ENCODE measurements at regions of chr12 and their contacts with region 1.

Region 1: DNA sequence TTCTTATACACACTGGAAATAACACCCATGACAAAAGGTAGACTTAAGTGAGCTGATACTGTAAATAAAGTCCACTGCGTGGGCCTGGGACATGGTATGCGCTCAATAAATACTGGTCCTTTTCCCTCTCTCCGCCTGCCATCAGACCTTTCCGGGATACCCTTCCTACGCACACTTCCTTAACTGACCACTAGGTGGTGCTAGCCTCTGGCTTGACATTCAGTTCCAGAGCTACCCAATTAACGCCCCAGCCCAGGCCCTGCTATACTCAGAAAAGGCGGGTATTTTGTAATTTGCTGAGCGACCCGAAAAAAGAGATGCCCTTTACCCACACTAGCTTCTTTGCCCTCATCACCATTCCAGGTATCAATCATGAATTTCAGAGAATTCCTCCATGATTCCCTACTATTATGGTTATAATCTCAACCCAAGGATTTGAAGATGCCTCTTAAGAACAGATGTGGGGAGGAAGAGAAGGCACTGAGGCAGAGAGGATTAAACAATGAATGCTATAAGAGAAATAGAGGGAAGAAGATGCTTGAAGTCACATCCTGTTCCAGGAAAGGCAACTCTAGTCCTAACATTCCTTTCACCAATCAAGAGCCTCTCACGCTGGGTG is 3.9 kb upstream of the LRP1 start:
- DNase-seq: peak in 4 of 5 donors; percentile 65 to 78 (median 74)
- ATAC-seq: peak in 3 of 4 donors; percentile 27 to 48 (median 30)
- H3K4me3 ChIP-seq: no peak overlapping the region
- H3K27ac ChIP-seq: no peak overlapping the region
- H3K4me1 ChIP-seq: peaks cover 0 to 20% (median 6%) of the 10 kb centered on the region in 12 donors
- H3K27me3 ChIP-seq: no peaks in the 10 kb centered on the region
- CTCF ChIP-seq: peak; percentile 91 to 100 (median 97)
- POLR2A ChIP-seq: no peak

Region 2: DNA sequence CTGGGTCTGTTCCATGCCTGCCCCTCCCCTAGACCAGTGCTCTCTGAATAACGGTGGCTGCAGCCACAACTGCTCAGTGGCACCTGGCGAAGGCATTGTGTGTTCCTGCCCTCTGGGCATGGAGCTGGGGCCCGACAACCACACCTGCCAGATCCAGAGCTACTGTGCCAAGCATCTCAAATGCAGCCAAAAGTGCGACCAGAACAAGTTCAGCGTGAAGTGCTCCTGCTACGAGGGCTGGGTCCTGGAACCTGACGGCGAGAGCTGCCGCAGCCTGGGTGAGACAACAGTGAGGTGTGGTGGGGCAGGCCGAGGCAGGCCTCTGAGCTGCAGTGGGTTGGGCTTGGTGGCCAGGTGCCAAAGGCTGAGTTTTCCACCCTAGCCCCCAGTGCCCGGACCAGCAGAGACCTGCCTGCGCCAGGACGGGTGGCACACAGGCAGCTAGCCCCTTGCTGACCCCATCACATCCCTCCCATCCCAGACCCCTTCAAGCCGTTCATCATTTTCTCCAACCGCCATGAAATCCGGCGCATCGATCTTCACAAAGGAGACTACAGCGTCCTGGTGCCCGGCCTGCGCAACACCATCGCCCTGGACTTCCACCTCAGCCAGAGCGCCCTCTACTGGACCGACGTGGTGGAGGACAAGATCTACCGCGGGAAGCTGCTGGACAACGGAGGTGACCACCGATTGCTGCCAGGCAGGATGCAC is 51.2 kb after region 1 on chr12:
- intact Hi-C with region 1: loop called in 8 of 10 experiments (anchors 2 kb)
- DNase-seq: peak; percentile 76 to 90 (median 82)
- ATAC-seq: peak; percentile 28 to 62 (median 48)
- H3K4me3 ChIP-seq: no peak overlapping the region
- H3K27ac ChIP-seq: peak overlapping the region in 5 of 12 donors; percentile 9 to 31 (median 20)
- H3K4me1 ChIP-seq: peaks cover 0 to 15% (median 1%) of the 10 kb centered on the region in 12 donors
- H3K27me3 ChIP-seq: no peaks in the 10 kb centered on the region
- CTCF ChIP-seq: peak; percentile 49 to 77 (median 66)
- POLR2A ChIP-seq: no peak

Region 3: DNA sequence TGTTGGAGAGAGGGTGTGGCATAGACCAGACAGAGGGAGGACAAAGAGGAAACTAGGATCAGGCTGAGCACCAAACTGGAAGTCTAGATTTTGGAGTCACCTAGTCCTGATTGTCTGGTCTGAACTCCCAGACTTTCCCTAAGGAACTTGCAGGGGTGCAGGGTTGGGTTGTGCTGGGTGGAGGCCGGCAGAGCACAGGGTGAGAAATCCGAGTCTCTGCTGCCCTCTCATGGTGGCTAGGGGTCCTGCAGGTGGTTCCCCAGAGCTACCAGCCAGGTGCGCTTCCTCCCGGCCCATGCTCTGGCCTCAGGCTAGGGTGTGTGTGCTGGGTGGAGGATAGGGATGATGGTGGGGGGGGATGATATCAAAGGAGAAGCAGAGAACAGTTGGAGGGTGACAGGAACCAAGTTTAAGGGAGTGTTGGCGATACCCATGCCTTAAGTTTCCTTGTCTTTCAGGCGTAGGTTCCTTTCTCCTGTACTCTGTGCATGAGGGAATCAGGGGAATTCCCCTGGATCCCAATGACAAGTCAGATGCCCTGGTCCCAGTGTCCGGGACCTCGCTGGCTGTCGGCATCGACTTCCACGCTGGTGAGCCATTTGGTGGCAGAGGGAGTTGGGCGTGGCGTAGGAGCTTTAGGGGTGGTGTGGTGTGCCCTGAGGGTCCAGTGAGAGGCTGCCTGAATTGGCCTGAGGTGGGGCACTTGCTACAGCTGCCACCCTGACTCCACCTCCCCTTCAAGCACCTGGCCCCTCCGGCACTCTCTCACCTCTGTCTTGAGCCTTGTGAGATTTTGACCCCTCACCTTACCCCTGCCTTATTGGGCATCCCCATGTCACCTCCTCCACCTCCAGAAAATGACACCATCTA is 58.8 kb after region 1 on chr12:
- intact Hi-C with region 1: loop called (anchors 1 to 2 kb)
- DNase-seq: peak; percentile 61 to 84 (median 78)
- ATAC-seq: peak; percentile 52 to 83 (median 76)
- H3K4me3 ChIP-seq: no peak overlapping the region
- H3K27ac ChIP-seq: no peak overlapping the region
- H3K4me1 ChIP-seq: no peaks in the 10 kb centered on the region
- H3K27me3 ChIP-seq: no peaks in the 10 kb centered on the region
- CTCF ChIP-seq: peak; percentile 71 to 92 (median 87)
- POLR2A ChIP-seq: no peak

Region 4: GRCh38 chr12:57238854-57239554 is 114.6 kb after region 1 on chr12:
- intact Hi-C with region 1: loop called in 1 of 10 experiments (anchors 5 kb)
- DNase-seq: peak; percentile 88 to 96 (median 90)
- ATAC-seq: peak; percentile 43 to 74 (median 70)
- H3K4me3 ChIP-seq: peak overlapping the region; percentile 18 to 66 (median 56)
- H3K27ac ChIP-seq: peak overlapping the region in 11 of 12 donors; percentile 7 to 86 (median 49)
- H3K4me1 ChIP-seq: peaks cover 5 to 99% (median 54%) of the 10 kb centered on the region in 12 donors
- H3K27me3 ChIP-seq: peaks cover 4 to 78% (median 36%) of the 10 kb centered on the region in 9 donors
- CTCF ChIP-seq: peak; percentile 100
- POLR2A ChIP-seq: peak in 1 of 2 donors; percentile 41